GM13976 (cell line): ENCODE measurements at regions of chr17 and their contacts with region 1.

Region 1: DNA sequence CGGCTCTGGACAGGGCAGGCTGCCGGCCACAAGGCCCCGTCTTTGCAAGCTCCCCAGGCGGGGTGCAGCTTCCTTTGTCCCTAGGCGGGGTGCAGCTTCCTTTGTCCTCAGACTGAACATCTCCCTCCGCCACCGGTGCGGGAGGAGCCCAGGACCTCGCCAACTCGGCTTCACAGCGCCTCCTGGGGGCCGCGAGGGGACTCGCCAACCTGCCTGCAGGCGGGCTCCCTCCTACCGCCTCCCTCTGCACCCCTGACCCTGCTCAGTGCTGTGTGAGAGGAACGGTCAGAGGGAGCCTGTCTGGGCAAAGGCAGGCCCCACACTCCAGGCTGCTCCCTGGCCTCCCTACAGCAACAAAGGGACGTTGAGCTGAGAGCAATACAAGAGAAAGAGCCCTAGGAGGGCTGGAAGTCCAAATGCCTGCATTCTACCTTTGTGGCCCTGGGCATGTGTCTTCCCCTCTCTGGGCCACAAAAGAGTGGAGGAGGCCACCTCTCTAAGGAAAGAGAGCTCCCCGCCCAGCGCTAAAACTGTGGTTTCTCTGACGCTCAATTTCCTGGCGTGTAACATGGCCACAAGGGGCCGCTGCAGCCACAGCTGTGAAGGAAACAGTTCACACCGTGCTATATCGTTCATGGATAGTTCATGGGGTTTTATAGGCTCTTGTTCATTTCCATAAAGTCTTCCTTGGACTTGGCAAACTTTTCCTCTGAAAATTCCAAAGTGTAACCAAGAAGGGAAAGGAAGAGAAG is 20.9 kb upstream of the KRT19 start:
- DNase-seq: peak; percentile 86
- CTCF ChIP-seq: peak; percentile 80

Region 2: DNA sequence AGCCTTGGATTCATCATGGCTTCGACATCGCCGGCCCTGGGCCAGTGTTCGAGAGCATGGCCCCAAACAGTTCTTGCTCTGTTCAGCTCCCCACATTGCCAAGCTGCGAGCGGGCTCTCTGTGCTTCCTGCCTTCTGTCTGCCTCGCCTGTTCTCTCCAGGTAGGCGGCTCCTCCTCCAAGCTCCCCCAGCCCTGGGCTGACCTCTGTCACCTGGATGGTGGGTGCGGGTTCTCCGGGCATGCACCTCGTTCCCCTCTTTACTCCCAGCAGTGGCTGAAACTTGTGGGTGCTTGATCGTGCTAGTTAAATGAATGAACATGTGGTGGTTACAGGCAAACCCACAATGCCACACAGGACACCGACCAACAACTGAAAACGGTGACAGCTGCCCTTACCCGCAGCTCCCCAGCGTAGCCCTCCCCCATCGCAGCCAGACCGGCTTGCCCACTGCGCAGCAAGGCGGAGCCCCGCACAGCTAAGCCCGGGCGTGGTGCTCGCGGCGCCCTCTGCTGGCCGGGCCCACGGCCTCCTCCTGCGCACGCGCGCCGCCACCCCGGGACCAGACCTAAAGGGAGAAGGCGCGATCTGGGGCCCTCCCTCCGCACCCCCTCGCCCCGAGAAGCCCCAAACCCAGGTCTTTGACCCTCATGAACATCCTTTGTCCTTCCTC is 116.7 kb after region 1 on chr17:
- in situ Hi-C with region 1: loop called (anchors 10 kb)
- DNase-seq: peak; percentile 94
- CTCF ChIP-seq: peak; percentile 99